Dendritic cell treated with granulocyte-macrophage colony-stimulating factor and Interleukin-4, amounts not matched to agents 40 ng/mL and 50 ng/mL, for 4 days (primary cell): ENCODE measurements at regions of chr7 and their contacts with region 1.

Region 1: GRCh38 chr7:100673300-100673941 is at the start of gene GNB2:
- H3K4me3 Mint-ChIP-seq: peak within 1 kb of the TSS; percentile 91
- H3K27ac Mint-ChIP-seq: peak within 1 kb of the TSS; percentile 96
- H3K4me1 Mint-ChIP-seq: peaks cover 24% of the 10 kb centered on the region
- H3K27me3 Mint-ChIP-seq: peaks cover 8% of the 10 kb centered on the region

Region 2: DNA sequence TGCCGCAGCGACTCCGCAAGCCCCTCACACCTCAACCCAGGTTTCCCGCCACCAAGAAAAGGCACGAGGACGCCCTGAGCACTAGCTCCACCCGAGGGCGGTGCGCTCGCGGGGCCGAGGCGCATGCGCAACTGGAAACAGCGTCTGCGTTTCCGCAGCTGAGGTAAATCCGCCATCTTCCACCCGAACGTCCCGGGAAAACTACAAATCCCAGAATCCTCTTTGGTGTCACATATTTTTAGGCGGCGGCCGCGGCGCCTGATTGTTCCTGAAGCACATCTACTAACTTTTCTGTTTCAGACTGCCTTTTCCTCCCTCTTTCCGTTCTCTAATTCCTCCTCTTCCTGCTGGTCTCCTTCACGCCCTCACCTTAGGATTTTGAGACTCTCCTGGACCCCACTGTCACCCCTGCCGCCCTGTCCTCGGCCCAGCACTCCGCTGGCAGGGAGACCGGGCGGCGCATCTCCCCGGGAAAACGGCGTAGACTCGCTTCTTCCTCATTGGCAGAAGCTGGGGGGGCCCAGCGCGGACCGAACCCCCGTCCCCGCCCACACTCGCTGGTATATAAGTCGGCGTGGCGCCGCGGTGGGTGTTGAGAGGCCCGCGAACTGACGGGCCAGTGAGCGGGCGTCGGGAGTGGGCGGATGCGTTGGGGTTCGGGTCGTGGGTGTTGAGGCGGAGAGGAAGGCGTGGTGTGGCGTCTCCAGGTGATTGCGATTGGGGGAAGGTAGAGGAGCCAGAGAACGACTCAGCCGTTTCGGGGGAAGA is 245.0 kb before region 1 on chr7 and contains the start of gene ZCWPW1:
- intact Hi-C with region 1: loop called (anchors 5 kb)
- H3K4me3 Mint-ChIP-seq: peak within 1 kb of the TSS; percentile 94
- H3K27ac Mint-ChIP-seq: peak within 1 kb of the TSS; percentile 97
- H3K4me1 Mint-ChIP-seq: peaks cover 51% of the 10 kb centered on the region
- H3K27me3 Mint-ChIP-seq: no peaks in the 10 kb centered on the region

Region 3: GRCh38 chr7:100444311-100445278 is 228.8 kb before region 1 on chr7:
- intact Hi-C with region 1: no loop called
- H3K4me3 Mint-ChIP-seq: no peak overlapping the region
- H3K27ac Mint-ChIP-seq: peak overlapping the region; percentile 55
- H3K4me1 Mint-ChIP-seq: peaks cover 32% of the 10 kb centered on the region
- H3K27me3 Mint-ChIP-seq: no peaks in the 10 kb centered on the region

Region 4: GRCh38 chr7:100586266-100587025 is 87.0 kb before region 1 on chr7 and contains the start of gene FBXO24:
- intact Hi-C with region 1: loop called (anchors 10 kb)
- H3K4me3 Mint-ChIP-seq: peak within 1 kb of the TSS; percentile 95
- H3K27ac Mint-ChIP-seq: peak within 1 kb of the TSS; percentile 90
- H3K4me1 Mint-ChIP-seq: peaks cover 59% of the 10 kb centered on the region
- H3K27me3 Mint-ChIP-seq: peaks cover 18% of the 10 kb centered on the region

Region 5: DNA sequence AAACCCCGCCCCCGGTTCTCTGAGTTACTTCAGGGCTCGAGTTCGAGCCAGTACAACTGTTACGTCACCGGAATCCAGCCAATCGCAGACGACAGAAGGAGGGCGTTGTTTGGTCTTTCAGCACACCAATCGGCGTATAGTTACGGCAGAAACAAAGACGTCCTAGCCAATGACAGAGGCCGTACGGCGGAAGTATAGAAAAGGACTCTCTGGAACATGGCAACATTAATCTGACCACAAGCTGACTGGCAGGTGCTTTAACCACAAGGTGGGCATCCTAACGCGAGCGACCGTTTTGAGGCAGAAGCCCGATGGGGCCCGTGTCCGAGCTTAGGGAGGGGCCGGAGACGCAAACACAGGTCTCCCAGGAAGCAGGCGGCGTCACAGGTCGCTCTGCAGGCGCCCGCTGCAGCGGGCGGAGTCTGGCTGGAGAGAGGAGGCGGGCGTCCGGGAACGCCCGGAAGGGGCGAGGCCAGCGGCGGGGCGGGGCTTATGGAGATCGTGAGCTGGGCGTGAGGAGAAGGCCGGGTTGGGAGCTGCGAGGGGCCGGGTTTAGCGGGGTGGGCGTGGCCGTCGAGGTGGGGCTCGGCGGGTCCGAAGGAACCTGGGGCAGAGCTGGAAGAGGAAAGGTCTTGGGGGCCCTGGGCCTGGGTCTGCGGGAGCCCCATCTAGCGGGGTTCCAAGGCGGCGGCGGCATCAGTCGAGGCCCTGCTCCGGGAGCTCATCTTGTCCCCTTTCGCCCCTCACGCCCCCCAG is 61.3 kb before region 1 on chr7 and contains the start of gene MOSPD3:
- intact Hi-C with region 1: loop called (anchors 1 kb)
- H3K4me3 Mint-ChIP-seq: peak within 1 kb of the TSS; percentile 96
- H3K27ac Mint-ChIP-seq: peak within 1 kb of the TSS; percentile 100
- H3K4me1 Mint-ChIP-seq: peaks cover 38% of the 10 kb centered on the region
- H3K27me3 Mint-ChIP-seq: peaks cover 7% of the 10 kb centered on the region

Region 6: GRCh38 chr7:100632951-100633717 is 40.3 kb before region 1 on chr7:
- intact Hi-C with region 1: loop called (anchors 1 kb)
- H3K4me3 Mint-ChIP-seq: peak overlapping the region; percentile 87
- H3K27ac Mint-ChIP-seq: peak overlapping the region; percentile 86
- H3K4me1 Mint-ChIP-seq: peaks cover 18% of the 10 kb centered on the region
- H3K27me3 Mint-ChIP-seq: peaks cover 36% of the 10 kb centered on the region

Region 7: GRCh38 chr7:100655908-100656674 is 17.3 kb before region 1 on chr7 and contains the start of gene ACTL6B:
- intact Hi-C with region 1: no loop called
- H3K4me3 Mint-ChIP-seq: no peak within 1 kb of the TSS
- H3K27ac Mint-ChIP-seq: no peak within 1 kb of the TSS
- H3K4me1 Mint-ChIP-seq: peaks cover 5% of the 10 kb centered on the region
- H3K27me3 Mint-ChIP-seq: peaks cover 73% of the 10 kb centered on the region

Region 8: DNA sequence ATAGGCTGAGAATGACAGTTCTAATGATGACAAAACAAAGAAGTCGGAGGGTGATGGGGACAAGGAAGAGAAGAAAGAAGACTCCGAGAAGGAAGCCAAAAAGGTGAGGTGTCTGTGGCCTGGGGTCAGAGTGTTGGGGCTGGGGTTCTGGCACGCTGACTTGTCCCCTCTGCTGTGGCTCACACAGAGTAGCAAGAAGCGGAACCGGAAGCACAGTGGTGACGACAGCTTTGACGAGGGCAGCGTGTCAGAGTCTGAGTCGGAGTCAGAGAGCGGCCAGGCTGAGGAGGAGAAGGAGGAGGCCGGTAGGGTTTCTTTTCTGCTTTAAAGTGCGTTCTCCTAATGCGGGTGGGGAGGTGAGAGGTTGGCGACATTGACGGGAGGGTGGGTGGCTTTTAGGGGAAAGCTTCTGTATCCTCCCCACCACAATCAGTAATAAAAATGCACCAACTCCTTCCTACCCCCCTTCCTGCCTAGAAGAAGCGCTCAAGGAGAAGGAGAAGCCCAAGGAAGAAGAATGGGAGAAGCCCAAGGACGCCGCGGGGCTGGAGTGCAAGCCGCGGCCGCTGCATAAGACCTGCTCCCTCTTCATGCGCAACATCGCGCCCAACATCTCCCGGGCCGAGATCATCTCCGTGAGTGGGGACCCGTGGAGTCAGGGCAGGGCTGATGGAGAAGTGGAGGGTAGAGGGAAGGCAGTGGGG is 211.5 kb after region 1 on chr7:
- intact Hi-C with region 1: no loop called
- H3K4me3 Mint-ChIP-seq: peak overlapping the region; percentile 15
- H3K27ac Mint-ChIP-seq: peak overlapping the region; percentile 53
- H3K4me1 Mint-ChIP-seq: peaks cover 57% of the 10 kb centered on the region
- H3K27me3 Mint-ChIP-seq: no peaks in the 10 kb centered on the region